MCF 10A (cell line): ENCODE measurements at regions of chr5 and their contacts with region 1.

Region 1: DNA sequence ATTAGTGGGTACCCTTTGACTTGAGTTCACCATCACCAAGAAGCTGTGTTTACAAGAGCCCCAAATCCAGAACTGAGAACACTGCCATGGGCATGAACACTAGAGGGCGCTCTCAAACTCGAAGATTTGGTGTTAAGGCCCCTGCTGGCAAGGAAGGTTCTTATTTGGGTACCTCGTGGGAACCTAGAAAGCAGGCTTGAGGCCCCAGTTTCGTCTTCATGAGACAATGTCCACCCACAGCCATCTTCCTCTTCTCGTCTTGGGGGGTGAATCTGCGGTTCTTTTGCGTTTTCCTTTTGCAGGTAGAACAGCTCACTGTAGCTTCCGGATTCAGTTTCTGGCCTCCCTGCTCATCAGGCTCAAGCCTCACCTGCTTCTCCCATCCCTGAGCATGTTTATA is 184.0 kb downstream of the SEMA5A start:
- DNase-seq: peak; percentile 85
- H3K4me3 Mint-ChIP-seq: no peak overlapping the region
- H3K27ac Mint-ChIP-seq: no peak overlapping the region
- H3K4me1 Mint-ChIP-seq: no peaks in the 10 kb centered on the region
- H3K27me3 Mint-ChIP-seq: no peaks in the 10 kb centered on the region
- CTCF ChIP-seq: peak; percentile 84

Region 2: DNA sequence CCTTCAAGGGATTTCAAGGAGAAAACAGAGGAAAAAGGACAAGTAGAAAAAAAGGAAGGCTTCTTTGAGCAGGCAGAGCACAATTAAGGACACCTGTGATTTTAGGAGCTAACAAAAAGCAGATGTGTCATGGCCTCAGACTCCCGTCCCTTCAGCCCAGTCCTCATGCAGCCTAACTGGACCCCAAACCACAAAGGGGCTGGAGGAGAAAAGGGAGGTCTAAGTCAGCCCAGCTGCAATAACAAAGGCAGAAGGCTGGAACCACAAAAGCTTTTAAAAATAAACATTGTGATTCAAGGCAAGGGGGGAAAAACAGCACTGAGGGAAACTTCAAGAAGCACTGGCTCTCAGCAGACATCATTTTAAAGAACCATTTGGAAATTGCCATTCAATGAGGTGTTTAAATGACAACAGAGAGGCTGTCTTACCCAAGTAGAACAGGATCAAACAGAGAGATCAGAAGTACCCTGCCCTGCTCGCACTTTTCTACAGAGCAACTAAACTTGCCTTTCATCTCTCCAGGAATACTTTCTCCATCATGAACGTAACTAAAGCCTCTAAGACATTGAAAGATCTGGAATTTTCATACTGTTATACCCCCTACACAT is 94.7 kb after region 1 on chr5:
- CTCF ChIA-PET with region 1: no interaction called
- POLR2A ChIA-PET with region 1: no interaction called
- intact Hi-C with region 1: no loop called
- DNase-seq: no peak
- H3K4me3 Mint-ChIP-seq: no peak overlapping the region
- H3K27ac Mint-ChIP-seq: no peak overlapping the region
- H3K4me1 Mint-ChIP-seq: peaks cover 7% of the 10 kb centered on the region
- H3K27me3 Mint-ChIP-seq: no peaks in the 10 kb centered on the region
- CTCF ChIP-seq: no peak

Region 3: DNA sequence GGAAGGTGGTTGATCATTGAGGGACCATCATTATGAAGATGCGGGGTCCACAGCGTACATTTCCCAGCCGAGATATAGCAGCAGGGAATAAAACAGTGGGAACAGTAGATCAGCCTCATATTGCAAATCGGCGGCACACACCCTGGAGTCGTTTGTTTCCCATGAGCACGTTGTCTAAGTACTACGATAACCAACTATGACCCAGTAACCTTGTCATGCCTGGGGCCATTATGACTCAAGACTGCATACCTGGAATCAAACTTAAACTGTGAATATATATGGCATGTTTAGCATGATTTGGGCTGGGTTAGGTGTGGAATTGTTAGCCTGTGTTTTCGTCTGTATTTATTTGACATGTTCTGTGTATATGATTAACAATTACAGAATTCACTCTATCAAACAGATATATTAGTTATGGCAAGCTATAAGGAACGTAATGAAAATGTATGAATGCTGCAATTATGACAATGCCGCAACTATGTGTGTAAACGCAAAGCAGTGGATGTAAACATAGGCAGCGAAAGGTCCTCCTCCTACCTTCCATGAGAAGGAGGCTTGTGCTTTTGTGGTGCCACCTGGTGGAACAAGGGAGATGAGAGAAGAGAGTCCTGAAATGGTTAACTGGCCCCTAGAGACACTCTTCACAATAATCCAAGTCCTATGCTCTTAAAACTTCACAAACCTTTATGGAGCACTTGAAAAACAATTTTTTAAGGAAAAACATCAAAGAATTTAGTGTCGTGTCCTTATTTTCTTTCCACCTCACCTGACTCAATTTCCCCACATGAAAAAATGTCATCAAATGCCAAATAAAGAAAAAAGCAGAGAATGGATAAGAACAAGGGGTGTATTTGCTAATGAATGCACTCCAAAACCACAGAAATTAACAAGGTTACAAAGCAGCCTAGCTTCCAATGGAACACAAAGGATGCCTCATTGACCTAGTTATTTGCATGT is 137.0 kb after region 1 on chr5:
- CTCF ChIA-PET with region 1: interaction called, 9 read pairs
- POLR2A ChIA-PET with region 1: no interaction called
- intact Hi-C with region 1: loop called (anchors 1 kb)
- DNase-seq: peak; percentile 84
- H3K4me3 Mint-ChIP-seq: no peak overlapping the region
- H3K27ac Mint-ChIP-seq: no peak overlapping the region
- H3K4me1 Mint-ChIP-seq: no peaks in the 10 kb centered on the region
- H3K27me3 Mint-ChIP-seq: no peaks in the 10 kb centered on the region
- CTCF ChIP-seq: peak; percentile 46